Tibial artery (tissue), 4 donors: ENCODE measurements at regions of chr12 and their contacts with region 1.

Region 1: GRCh38 chr12:53465679-53466078 is 13.8 kb downstream of the PCBP2 start:
- DNase-seq: no peak
- H3K4me3 ChIP-seq: no peak overlapping the region
- H3K27ac ChIP-seq: no peak overlapping the region
- H3K4me1 ChIP-seq: peaks cover 0 to 11% (median 2%) of the 10 kb centered on the region in 4 donors
- H3K27me3 ChIP-seq: no peaks in the 10 kb centered on the region
- CTCF ChIP-seq: no peak

Region 2: GRCh38 chr12:54337280-54337842 is 871.7 kb after region 1 on chr12:
- intact Hi-C with region 1: loop called (anchors 10 kb)
- DNase-seq: no peak
- H3K4me3 ChIP-seq: no peak overlapping the region
- H3K27ac ChIP-seq: peak overlapping the region; percentile 12 to 21
- H3K4me1 ChIP-seq: peaks cover 0 to 37% (median 20%) of the 10 kb centered on the region in 4 donors
- H3K27me3 ChIP-seq: no peaks in the 10 kb centered on the region
- CTCF ChIP-seq: no peak